ENCODE measurements at regions of chr15 and their contacts with region 1.

Region 1: GRCh38 chr15:41331833-41332787 is at the start of gene OIP5:
- DNase-seq: peak; percentile 98
- ATAC-seq: peak; percentile 98
- H3K4me3 Mint-ChIP-seq: peak within 1 kb of the TSS; percentile 99
- H3K27ac Mint-ChIP-seq: peak within 1 kb of the TSS; percentile 100
- H3K4me1 Mint-ChIP-seq: peaks cover 22% of the 10 kb centered on the region
- H3K27me3 Mint-ChIP-seq: no peaks in the 10 kb centered on the region
- CTCF ChIP-seq: no peak
- total RNA-seq, gene OIP5: 28.9 to 33.7 TPM (median 30.4 TPM) in 3 replicates

Region 2: GRCh38 chr15:41230650-41231533 is 101.2 kb before region 1 on chr15 and contains the starts of genes CHP1 and EXD1:
- CTCF ChIA-PET with region 1: interaction called, 16 read pairs
- POLR2A ChIA-PET with region 1: interaction called, 7 read pairs
- DNase-seq: peak; percentile 98
- ATAC-seq: peak; percentile 98
- H3K4me3 Mint-ChIP-seq: peak within 1 kb of the TSS; percentile 86
- H3K27ac Mint-ChIP-seq: peak within 1 kb of the TSS; percentile 85
- H3K4me1 Mint-ChIP-seq: peaks cover 12% of the 10 kb centered on the region
- H3K27me3 Mint-ChIP-seq: peaks cover 22% of the 10 kb centered on the region
- CTCF ChIP-seq: peak; percentile 99
- total RNA-seq, gene CHP1: 76.5 to 91.7 TPM (median 91.2 TPM) in 3 replicates
- total RNA-seq, gene EXD1: 0.26 to 0.44 TPM (median 0.37 TPM) in 3 replicates

Region 3: GRCh38 chr15:41401904-41402267 is 69.8 kb after region 1 on chr15:
- CTCF ChIA-PET with region 1: no interaction called
- POLR2A ChIA-PET with region 1: interaction called, 11 read pairs
- DNase-seq: no peak
- ATAC-seq: no peak
- H3K4me3 Mint-ChIP-seq: peak overlapping the region; percentile 82
- H3K27ac Mint-ChIP-seq: peak overlapping the region; percentile 69
- H3K4me1 Mint-ChIP-seq: peaks cover 2% of the 10 kb centered on the region; the same call in 1 of the 2 replicates
- H3K27me3 Mint-ChIP-seq: no peaks in the 10 kb centered on the region
- CTCF ChIP-seq: no peak

Measured in WTC11 (cell line).